Right ventricle myocardium inferior (tissue), 1 donor: ENCODE measurements at regions of chr17 and their contacts with region 1.

Region 1: GRCh38 chr17:78781948-78782916 is at the start of gene CYTH1:
- DNase-seq: peak; percentile 98
- ATAC-seq: peak; percentile 97
- total RNA-seq, gene CYTH1: 34.0 TPM

Region 2: DNA sequence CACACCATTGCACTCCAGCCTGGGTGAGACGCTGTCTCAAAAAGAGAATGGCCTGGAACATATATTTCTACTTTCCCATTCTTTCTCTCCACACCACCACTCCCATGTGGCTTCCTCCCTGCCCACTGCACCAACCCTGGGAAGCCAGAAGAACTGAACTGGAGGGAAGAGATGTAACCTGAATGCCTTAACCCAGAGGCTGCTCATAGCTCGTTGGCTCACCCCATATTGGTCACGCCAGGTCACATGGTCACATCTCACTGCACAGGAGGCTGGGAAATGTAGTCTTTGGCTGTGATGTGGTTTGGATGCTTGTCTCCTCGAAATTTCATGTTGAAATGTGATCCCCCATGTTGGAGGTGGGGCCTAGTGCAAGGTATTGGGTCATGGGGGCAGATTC is 199.1 kb before region 1 on chr17:
- intact Hi-C with region 1: no loop called
- DNase-seq: no peak
- ATAC-seq: no peak

Region 3: DNA sequence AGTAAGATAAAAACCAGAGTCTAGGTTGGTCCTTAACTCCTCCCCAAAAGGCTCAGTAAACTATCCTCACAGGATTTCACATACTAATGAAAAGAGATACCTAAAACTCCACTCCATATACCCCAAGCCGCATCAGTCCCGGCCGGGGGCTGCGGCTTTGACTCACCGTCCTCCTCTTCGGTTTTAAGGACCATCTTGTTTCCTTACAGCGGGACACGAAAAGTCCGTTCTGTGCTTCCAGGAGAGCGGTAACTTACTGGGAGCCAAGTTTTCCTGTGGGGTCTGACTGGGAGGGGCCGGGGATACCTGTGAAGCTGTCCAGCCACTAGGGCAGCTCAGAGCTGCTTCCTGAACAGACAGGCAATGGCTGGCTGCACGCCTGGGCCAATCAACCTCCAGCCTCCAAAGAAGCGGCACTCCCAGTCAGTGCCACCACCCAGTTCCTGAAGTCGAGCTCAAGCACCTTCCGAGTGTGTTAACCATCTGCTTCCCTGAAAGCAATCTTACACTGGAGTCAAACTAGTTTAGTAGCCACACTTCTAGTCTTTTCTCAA is 45.6 kb before region 1 on chr17:
- intact Hi-C with region 1: loop called (anchors 10 kb)
- DNase-seq: peak; percentile 88
- ATAC-seq: peak; percentile 76